ENCODE measurements at regions of chr7 and their contacts with region 1.

Region 1: GRCh38 chr7:24436131-24436920 is 136.9 kb upstream of the PALS2 start:
- DNase-seq: no peak
- H3K4me3 ChIP-seq: no peak overlapping the region
- H3K27ac ChIP-seq: no peak overlapping the region
- H3K4me1 ChIP-seq: no peaks in the 10 kb centered on the region
- H3K27me3 ChIP-seq: no peaks in the 10 kb centered on the region
- CTCF ChIP-seq: no peak

Region 2: DNA sequence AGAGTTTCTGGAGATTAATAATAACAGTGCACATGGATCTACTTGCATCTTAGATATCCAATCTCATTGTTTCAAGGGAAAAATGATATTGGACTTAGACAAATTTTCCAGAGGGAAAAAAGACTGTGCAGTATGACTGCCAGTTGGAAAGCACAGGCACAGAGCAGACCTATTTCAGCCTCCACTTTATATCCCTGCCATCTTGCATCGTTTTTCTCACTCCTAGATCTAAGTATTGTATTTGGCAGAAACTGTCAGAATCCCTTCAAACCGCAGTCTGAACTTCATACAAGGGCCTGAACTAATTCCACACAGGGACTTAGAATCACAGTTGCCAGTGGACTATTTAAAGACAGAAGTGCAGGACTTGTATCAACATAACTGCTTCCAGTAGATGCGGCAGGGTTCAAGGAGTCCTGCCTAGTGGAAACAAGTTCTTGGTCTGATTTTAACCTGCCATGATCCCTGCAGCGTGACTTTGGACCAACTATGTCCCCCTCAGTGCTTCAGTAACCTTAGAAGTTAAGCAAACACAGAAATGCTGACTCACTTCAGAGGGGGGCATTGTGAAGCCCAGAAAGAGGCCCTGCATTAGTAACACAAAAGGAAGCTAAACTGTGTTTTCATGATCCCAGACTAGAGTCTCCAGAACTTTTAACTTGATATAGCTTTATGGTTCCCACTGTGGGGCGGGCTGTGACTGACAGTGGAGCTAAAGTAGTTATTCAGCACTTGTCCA is 41.2 kb after region 1 on chr7:
- CTCF ChIA-PET with region 1: interaction called, 21 read pairs
- POLR2A ChIA-PET with region 1: no interaction called
- intact Hi-C with region 1: no loop called
- DNase-seq: peak; percentile 37 to 76
- H3K4me3 ChIP-seq: peak overlapping the region; percentile 3; the same call in 1 of the 2 replicates
- H3K27ac ChIP-seq: peak overlapping the region; percentile 61
- H3K4me1 ChIP-seq: peaks cover 19% of the 10 kb centered on the region
- H3K27me3 ChIP-seq: no peaks in the 10 kb centered on the region
- CTCF ChIP-seq: no peak

Region 3: GRCh38 chr7:24597014-24597413 is 160.7 kb after region 1 on chr7:
- CTCF ChIA-PET with region 1: no interaction called
- POLR2A ChIA-PET with region 1: no interaction called
- intact Hi-C with region 1: no loop called
- DNase-seq: no peak
- H3K4me3 ChIP-seq: no peak overlapping the region
- H3K27ac ChIP-seq: no peak overlapping the region
- H3K4me1 ChIP-seq: no peaks in the 10 kb centered on the region
- H3K27me3 ChIP-seq: no peaks in the 10 kb centered on the region
- CTCF ChIP-seq: no peak

Measured in PC-9 (cell line).